BJ (cell line): ENCODE measurements at regions of chr2 and their contacts with region 1.

Region 1: DNA sequence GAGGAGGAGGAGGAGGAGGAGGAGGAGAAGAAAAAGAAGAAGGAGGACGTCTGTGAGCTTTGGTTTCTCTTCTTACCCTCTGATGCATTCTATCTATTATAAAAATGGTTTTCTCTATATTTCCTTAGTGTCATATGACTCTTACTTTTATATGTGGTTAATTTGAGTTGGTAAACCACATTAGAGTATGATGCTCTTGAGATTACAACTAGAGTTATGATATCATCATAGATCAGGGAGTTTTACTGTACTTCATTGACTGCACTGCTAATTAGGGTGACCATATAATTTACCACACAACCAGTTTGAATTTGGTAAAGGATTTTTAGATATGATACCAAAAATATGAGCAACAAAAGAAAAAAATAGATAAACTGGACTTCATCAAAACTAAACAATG is 166.4 kb downstream of the ZNF385B start:
- DNase-seq: no peak
- H3K4me3 ChIP-seq: no peak overlapping the region
- H3K27me3 ChIP-seq: no peaks in the 10 kb centered on the region
- CTCF ChIP-seq: no peak

Region 2: GRCh38 chr2:179435000-179435399 is 260.0 kb before region 1 on chr2:
- CTCF ChIA-PET with region 1: no interaction called
- POLR2A ChIA-PET with region 1: interaction called, 25 read pairs
- DNase-seq: no peak
- H3K4me3 ChIP-seq: no peak overlapping the region
- H3K27me3 ChIP-seq: no peaks in the 10 kb centered on the region
- CTCF ChIP-seq: no peak

Region 3: GRCh38 chr2:179513181-179513580 is 181.8 kb before region 1 on chr2:
- CTCF ChIA-PET with region 1: no interaction called
- POLR2A ChIA-PET with region 1: no interaction called
- DNase-seq: no peak
- H3K4me3 ChIP-seq: no peak overlapping the region
- H3K27me3 ChIP-seq: no peaks in the 10 kb centered on the region
- CTCF ChIP-seq: no peak